CD4-positive, alpha-beta T cell (primary cell): ENCODE measurements at regions of chr4 and their contacts with region 1.

Region 1: DNA sequence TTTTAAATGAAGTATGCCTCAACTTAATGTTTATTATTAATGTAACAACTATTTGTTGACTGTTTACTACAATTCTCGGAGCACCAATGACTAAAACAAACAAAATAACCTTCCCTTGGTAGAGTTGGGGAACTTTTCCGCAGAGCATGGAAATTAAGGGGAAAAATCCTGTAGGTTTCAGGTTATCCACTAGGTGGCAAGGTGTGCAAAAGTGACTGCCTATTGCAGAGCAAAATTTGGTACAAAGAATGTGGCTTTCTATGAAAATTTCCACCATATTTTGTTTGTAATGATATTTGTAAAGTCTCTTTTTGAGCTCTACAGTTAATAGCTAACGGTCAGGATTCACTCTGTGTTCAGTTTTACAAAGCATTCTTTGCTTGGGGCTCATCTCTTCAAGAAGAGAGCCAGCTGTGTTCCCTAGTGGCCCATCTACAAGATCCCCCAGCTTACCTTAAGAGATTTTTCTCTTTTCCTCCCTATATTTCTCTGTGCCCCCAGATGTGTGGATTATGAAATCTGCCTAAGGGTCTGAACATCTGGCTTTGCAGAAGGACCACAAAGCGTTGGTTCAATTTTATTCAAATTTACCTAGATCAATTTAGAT is 61.1 kb downstream of the FBXO8 start:
- DNase-seq: peak in 3 of 14 experiments; percentile 35 to 49 (median 46)
- ATAC-seq: peak; percentile 63
- H3K4me3 ChIP-seq: no peak overlapping the region
- H3K4me3 Mint-ChIP-seq: no peak overlapping the region
- H3K27ac ChIP-seq: no peak overlapping the region
- H3K27ac Mint-ChIP-seq: no peak overlapping the region
- H3K4me1 ChIP-seq: peaks cover 12% of the 10 kb centered on the region
- H3K4me1 Mint-ChIP-seq: peaks cover 10% of the 10 kb centered on the region
- H3K27me3 ChIP-seq: peaks cover 17 to 24% of the 10 kb centered on the region in 2 experiments
- H3K27me3 Mint-ChIP-seq: peaks cover 67% of the 10 kb centered on the region
- CTCF ChIP-seq: peak; percentile 84

Region 2: GRCh38 chr4:173522123-173522950 is 700.0 kb before region 1 on chr4:
- CTCF ChIA-PET with region 1: no interaction called
- POLR2A ChIA-PET with region 1: no interaction called
- intact Hi-C with region 1: loop called (anchors 5 to 10 kb)
- DNase-seq: no peak
- ATAC-seq: no peak
- H3K4me3 ChIP-seq: peak overlapping the region; percentile 10
- H3K4me3 Mint-ChIP-seq: peak overlapping the region; percentile 62
- H3K27ac ChIP-seq: no peak overlapping the region
- H3K27ac Mint-ChIP-seq: peak overlapping the region; percentile 27
- H3K4me1 ChIP-seq: peaks cover 39% of the 10 kb centered on the region
- H3K4me1 Mint-ChIP-seq: peaks cover 42% of the 10 kb centered on the region
- H3K27me3 ChIP-seq: peaks cover 99 to 100% of the 10 kb centered on the region in 2 experiments
- H3K27me3 Mint-ChIP-seq: peaks cover 100% of the 10 kb centered on the region
- CTCF ChIP-seq: no peak

Region 3: GRCh38 chr4:173529477-173530325 is 692.7 kb before region 1 on chr4 and contains the start of gene HAND2:
- CTCF ChIA-PET with region 1: no interaction called
- POLR2A ChIA-PET with region 1: no interaction called
- intact Hi-C with region 1: loop called (anchors 5 to 10 kb)
- DNase-seq: no peak
- ATAC-seq: no peak
- H3K4me3 ChIP-seq: peak within 1 kb of the TSS; percentile 22
- H3K4me3 Mint-ChIP-seq: peak within 1 kb of the TSS; percentile 46
- H3K27ac ChIP-seq: no peak within 1 kb of the TSS
- H3K27ac Mint-ChIP-seq: no peak within 1 kb of the TSS
- H3K4me1 ChIP-seq: peaks cover 41% of the 10 kb centered on the region
- H3K4me1 Mint-ChIP-seq: peaks cover 20% of the 10 kb centered on the region
- H3K27me3 ChIP-seq: peaks cover 80 to 97% of the 10 kb centered on the region in 2 experiments
- H3K27me3 Mint-ChIP-seq: peaks cover 94% of the 10 kb centered on the region
- CTCF ChIP-seq: no peak
- total RNA-seq, gene HAND2: not detected

Region 4: GRCh38 chr4:174282836-174283506 is 60.6 kb after region 1 on chr4:
- CTCF ChIA-PET with region 1: no interaction called
- POLR2A ChIA-PET with region 1: interaction called, 4 read pairs
- intact Hi-C with region 1: loop called in 1 of 2 experiments (anchors 5 kb)
- DNase-seq: peak in 13 of 14 experiments; percentile 57 to 93 (median 68)
- ATAC-seq: peak; percentile 92
- H3K4me3 ChIP-seq: peak overlapping the region; percentile 91
- H3K4me3 Mint-ChIP-seq: peak overlapping the region; percentile 95
- H3K27ac ChIP-seq: peak overlapping the region; percentile 95 to 99
- H3K27ac Mint-ChIP-seq: peak overlapping the region; percentile 99
- H3K4me1 ChIP-seq: peaks cover 11% of the 10 kb centered on the region
- H3K4me1 Mint-ChIP-seq: peaks cover 90% of the 10 kb centered on the region
- H3K27me3 ChIP-seq: no peaks in the 10 kb centered on the region
- H3K27me3 Mint-ChIP-seq: no peaks in the 10 kb centered on the region
- CTCF ChIP-seq: no peak

Region 5: GRCh38 chr4:174318829-174319764 is 96.7 kb after region 1 on chr4:
- CTCF ChIA-PET with region 1: interaction called, 3 read pairs
- POLR2A ChIA-PET with region 1: no interaction called
- intact Hi-C with region 1: loop called (anchors 1 kb)
- DNase-seq: peak in 3 of 14 experiments; percentile 47 to 62 (median 52)
- ATAC-seq: no peak
- H3K4me3 ChIP-seq: no peak overlapping the region
- H3K4me3 Mint-ChIP-seq: no peak overlapping the region
- H3K27ac ChIP-seq: no peak overlapping the region
- H3K27ac Mint-ChIP-seq: no peak overlapping the region
- H3K4me1 ChIP-seq: no peaks in the 10 kb centered on the region
- H3K4me1 Mint-ChIP-seq: no peaks in the 10 kb centered on the region
- H3K27me3 ChIP-seq: no peaks in the 10 kb centered on the region
- H3K27me3 Mint-ChIP-seq: no peaks in the 10 kb centered on the region
- CTCF ChIP-seq: peak; percentile 83